Right ventricle myocardium superior (tissue), 1 donor: ENCODE measurements at regions of chr5 and their contacts with region 1.

Region 1: GRCh38 chr5:112419986-112420864 is 1.1 kb upstream of the EPB41L4A start:
- DNase-seq: peak; percentile 90
- ATAC-seq: peak; percentile 93

Region 2: DNA sequence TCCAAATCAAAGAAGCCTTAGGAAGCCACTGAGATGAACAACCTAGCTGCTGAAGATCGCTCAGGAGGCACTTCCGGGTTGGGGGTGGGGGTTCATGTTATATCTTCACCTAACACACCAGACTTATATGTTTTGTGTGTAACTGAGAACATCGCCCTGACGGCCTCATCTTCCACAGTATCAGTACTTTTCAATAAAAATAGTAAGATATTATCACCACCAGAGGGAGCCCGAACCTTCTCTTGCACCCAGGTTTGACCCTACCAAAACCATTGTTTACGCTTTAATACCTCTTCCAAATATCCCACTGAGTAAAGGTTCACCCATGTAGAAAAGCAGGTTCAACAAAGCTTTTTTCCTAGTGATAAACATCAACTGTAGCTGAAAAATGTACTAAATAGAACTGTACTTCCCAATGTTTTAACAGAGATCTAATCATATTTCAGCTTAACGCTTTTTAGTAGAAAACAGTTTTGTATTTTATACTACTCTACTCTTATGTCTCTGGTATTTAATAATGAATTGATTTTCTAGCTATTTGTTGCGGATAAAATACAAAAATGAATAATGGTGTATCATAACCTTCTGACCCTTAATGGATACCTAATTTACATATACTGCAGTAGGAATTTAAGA is 245.1 kb before region 1 on chr5:
- intact Hi-C with region 1: loop called (anchors 5 kb)
- DNase-seq: no peak
- ATAC-seq: peak; percentile 82

Region 3: DNA sequence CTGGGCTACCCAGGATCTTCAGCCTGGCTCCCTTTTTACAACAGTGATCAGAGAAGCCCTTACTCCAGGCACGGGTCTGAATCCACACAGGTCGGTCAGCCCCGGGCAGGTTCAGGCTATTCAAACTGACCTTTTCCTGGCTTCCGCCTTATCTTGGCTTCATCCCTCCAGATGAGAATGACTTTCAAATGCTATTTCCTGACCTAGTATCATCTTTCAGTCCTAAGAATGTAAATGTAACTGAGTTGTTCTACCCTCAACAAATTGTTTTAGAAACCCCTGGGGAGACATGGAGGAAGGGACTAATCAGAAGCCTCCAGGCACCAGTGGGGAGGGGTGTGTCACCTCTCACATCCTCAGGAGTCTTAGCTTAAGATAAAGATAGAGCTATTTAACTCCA is 214.4 kb before region 1 on chr5:
- intact Hi-C with region 1: loop called (anchors 2 kb)
- DNase-seq: no peak
- ATAC-seq: no peak